ENCODE measurements at regions of chr12 and their contacts with region 1.

Region 1: DNA sequence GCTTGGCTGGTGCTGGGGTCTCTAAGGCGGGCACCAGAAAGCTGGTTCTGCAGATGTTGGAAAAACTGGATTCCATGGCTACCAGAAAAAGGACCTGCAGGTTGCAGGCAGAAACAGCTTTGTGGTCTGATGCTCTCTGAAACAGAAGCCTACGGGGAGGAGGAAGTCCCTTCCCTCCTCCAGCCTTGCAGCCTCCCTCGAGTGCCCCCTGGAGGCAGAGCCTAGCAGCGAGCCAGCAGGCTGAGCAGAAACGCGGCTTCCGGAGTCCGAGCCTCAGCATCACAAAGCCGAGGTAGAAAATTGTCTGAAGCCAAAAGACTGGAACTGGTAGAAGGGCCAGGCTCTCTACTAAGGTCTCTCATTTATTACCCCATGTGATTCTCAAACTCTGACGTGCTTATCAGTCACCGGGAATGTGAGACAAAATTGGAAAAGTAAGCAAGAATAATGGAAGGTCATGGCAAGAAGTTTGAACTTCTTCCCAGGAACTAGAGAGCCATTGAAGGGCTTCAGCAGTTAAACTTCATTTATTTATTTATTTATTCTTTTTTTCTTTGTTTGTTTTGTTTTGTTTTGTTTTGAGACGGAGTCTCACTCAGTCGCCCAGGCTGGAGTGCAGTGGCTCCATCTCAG is 82.2 kb upstream of the CPSF6 start:
- DNase-seq: peak; percentile 78 to 90
- ATAC-seq: peak; percentile 56 to 86 (median 76)
- H3K4me3 ChIP-seq: no peak overlapping the region
- H3K27ac ChIP-seq: no peak overlapping the region
- H3K4me1 ChIP-seq: no peaks in the 10 kb centered on the region
- H3K27me3 ChIP-seq: no peaks in the 10 kb centered on the region
- CTCF ChIP-seq: peak; percentile 76

Region 2: GRCh38 chr12:69254046-69254445 is 96.9 kb after region 1 on chr12:
- intact Hi-C with region 1: loop called (anchors 2 kb)
- DNase-seq: no peak
- ATAC-seq: peak; percentile 62 to 84 (median 72)
- H3K4me3 ChIP-seq: no peak overlapping the region
- H3K27ac ChIP-seq: no peak overlapping the region
- H3K4me1 ChIP-seq: peaks cover 16% of the 10 kb centered on the region
- H3K27me3 ChIP-seq: no peaks in the 10 kb centered on the region
- CTCF ChIP-seq: peak; percentile 66